ENCODE measurements at regions of chr3 and their contacts with region 1.

Region 1: GRCh38 chr3:154886437-154886836 is 193.7 kb upstream of the MME start:
- DNase-seq: peak; percentile 85
- H3K4me3 Mint-ChIP-seq: no peak overlapping the region
- H3K27ac Mint-ChIP-seq: peak overlapping the region; percentile 89
- H3K4me1 Mint-ChIP-seq: peaks cover 7% of the 10 kb centered on the region
- H3K27me3 Mint-ChIP-seq: no peaks in the 10 kb centered on the region
- CTCF ChIP-seq: no peak

Region 2: DNA sequence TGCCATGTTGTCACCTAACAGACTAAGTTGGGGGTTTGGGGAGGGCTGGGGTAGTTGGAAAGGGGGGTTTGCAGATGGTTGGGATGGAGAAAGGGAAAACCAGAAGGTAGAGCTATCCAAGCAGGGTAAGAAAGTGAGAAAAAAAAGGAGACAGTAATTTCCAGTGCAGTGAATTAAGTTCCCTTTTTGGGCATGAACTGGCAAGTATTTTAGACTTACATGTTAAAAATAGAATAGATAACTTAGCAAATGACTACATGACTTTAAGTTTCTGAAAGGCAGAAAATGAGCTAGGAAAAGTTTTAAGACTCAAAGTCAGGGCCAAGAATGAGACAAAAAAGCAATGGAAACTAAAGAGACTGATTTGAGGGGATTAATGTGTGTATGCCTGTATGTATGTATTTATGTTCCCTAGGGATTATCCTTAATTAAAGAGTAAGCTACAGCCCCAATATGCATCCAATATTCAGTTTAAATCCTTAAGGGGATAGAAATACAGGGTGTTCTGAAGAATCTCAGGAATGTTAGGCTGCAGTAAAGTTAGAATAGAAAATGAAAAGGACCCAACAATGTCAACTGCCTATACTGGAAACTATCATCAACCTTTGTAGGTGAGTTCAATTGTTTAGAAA is 91.5 kb before region 1 on chr3:
- CTCF ChIA-PET with region 1: no interaction called
- POLR2A ChIA-PET with region 1: no interaction called
- intact Hi-C with region 1: loop called (anchors 5 kb)
- DNase-seq: no peak
- H3K4me3 Mint-ChIP-seq: no peak overlapping the region
- H3K27ac Mint-ChIP-seq: no peak overlapping the region
- H3K4me1 Mint-ChIP-seq: peaks cover 11% of the 10 kb centered on the region
- H3K27me3 Mint-ChIP-seq: no peaks in the 10 kb centered on the region
- CTCF ChIP-seq: no peak

Region 3: DNA sequence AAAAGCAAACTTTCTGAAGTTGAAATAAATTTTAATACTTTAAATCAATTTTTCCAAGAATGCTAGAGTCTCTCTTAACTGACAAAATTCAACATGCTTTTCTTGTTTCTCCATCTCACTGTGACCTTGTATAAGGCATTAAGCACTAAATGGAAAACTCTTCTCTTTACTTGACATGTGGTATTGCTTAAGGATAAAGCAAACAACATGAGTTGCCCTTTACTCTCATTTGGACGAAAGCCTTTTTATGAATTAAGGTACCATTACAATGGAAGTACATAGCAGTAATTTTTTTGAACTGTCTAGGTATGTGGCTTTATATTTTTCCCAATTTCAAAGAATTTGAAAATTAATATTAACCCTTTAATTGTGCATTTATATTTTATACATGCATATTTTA is 405.7 kb after region 1 on chr3:
- CTCF ChIA-PET with region 1: no interaction called
- POLR2A ChIA-PET with region 1: no interaction called
- intact Hi-C with region 1: no loop called
- DNase-seq: no peak
- H3K4me3 Mint-ChIP-seq: no peak overlapping the region
- H3K27ac Mint-ChIP-seq: no peak overlapping the region
- H3K4me1 Mint-ChIP-seq: no peaks in the 10 kb centered on the region
- H3K27me3 Mint-ChIP-seq: no peaks in the 10 kb centered on the region
- CTCF ChIP-seq: no peak